IMR-90 (cell line): ENCODE measurements at regions of chr4 and their contacts with region 1.

Region 1: GRCh38 chr4:147581601-147582350 is 35.4 kb upstream of the TMEM184C start:
- DNase-seq: peak; percentile 91
- ATAC-seq: peak; percentile 66
- H3K4me3 ChIP-seq: no peak overlapping the region
- H3K27ac ChIP-seq: peak overlapping the region; percentile 66
- H3K4me1 ChIP-seq: peaks cover 18% of the 10 kb centered on the region
- H3K27me3 ChIP-seq: no peaks in the 10 kb centered on the region
- CTCF ChIP-seq: no peak
- POLR2A ChIP-seq: no peak
- RAD21 ChIP-seq: no peak

Region 2: GRCh38 chr4:147425019-147425418 is 156.8 kb before region 1 on chr4:
- CTCF ChIA-PET with region 1: no interaction called
- POLR2A ChIA-PET with region 1: no interaction called
- dilution Hi-C with region 1: no loop called
- in situ Hi-C with region 1: no loop called
- intact Hi-C with region 1: no loop called
- DNase-seq: peak; percentile 20
- ATAC-seq: no peak
- H3K4me3 ChIP-seq: no peak overlapping the region
- H3K27ac ChIP-seq: no peak overlapping the region
- H3K4me1 ChIP-seq: no peaks in the 10 kb centered on the region
- H3K27me3 ChIP-seq: no peaks in the 10 kb centered on the region
- CTCF ChIP-seq: no peak
- POLR2A ChIP-seq: no peak
- RAD21 ChIP-seq: no peak

Region 3: GRCh38 chr4:147539959-147540358 is 41.8 kb before region 1 on chr4:
- CTCF ChIA-PET with region 1: no interaction called
- POLR2A ChIA-PET with region 1: no interaction called
- dilution Hi-C with region 1: no loop called
- in situ Hi-C with region 1: no loop called
- intact Hi-C with region 1: loop called (anchors 5 kb)
- DNase-seq: no peak
- ATAC-seq: no peak
- H3K4me3 ChIP-seq: no peak overlapping the region
- H3K27ac ChIP-seq: no peak overlapping the region
- H3K4me1 ChIP-seq: peaks cover 3% of the 10 kb centered on the region; the same call in 1 of the 2 replicates
- H3K27me3 ChIP-seq: no peaks in the 10 kb centered on the region
- CTCF ChIP-seq: no peak
- POLR2A ChIP-seq: no peak
- RAD21 ChIP-seq: no peak